Posterior cingulate gyrus (tissue), 11 donors: ENCODE measurements at regions of chr12 and their contacts with region 1.

Region 1: GRCh38 chr12:49673446-49674317 is 33.5 kb downstream of the FMNL3 start:
- DNase-seq: peak; percentile 90 to 99 (median 94)

Region 2: GRCh38 chr12:49568442-49569162 is 105.1 kb before region 1 on chr12:
- intact Hi-C with region 1: no loop called
- DNase-seq: peak in 1 of 10 donors; percentile 72

Region 3: GRCh38 chr12:49740930-49741881 is 67.5 kb after region 1 on chr12 and contains the start of gene TMBIM6:
- intact Hi-C with region 1: loop called (anchors 1 kb)
- DNase-seq: peak; percentile 98 to 100 (median 100)